GM12878 (cell line): ENCODE measurements at regions of chr4 and their contacts with region 1.

Region 1: GRCh38 chr4:163663454-163664225 is 169.2 kb downstream of the TMA16 start:
- DNase-seq: peak; percentile 78
- ATAC-seq: peak; percentile 87
- H3K4me3 ChIP-seq: no peak overlapping the region
- H3K27ac ChIP-seq: peak overlapping the region; percentile 70
- H3K4me1 ChIP-seq: peaks cover 39% of the 10 kb centered on the region
- H3K27me3 ChIP-seq: no peaks in the 10 kb centered on the region
- CTCF ChIP-seq: no peak
- EP300 ChIP-seq: peak; percentile 77 to 80
- POLR2A ChIP-seq: no peak
- RAD21 ChIP-seq: no peak

Region 2: GRCh38 chr4:162126729-162127128 is 1536.9 kb before region 1 on chr4:
- CTCF ChIA-PET with region 1: no interaction called
- POLR2A ChIA-PET with region 1: no interaction called
- RAD21 ChIA-PET with region 1: no interaction called
- SMC1A ChIA-PET with region 1: no interaction called
- in situ Hi-C with region 1: no loop called
- intact Hi-C with region 1: no loop called
- DNase-seq: no peak
- ATAC-seq: no peak
- H3K4me3 ChIP-seq: no peak overlapping the region
- H3K27ac ChIP-seq: no peak overlapping the region
- H3K4me1 ChIP-seq: no peaks in the 10 kb centered on the region
- H3K27me3 ChIP-seq: no peaks in the 10 kb centered on the region
- CTCF ChIP-seq: no peak
- EP300 ChIP-seq: no peak
- POLR2A ChIP-seq: no peak
- RAD21 ChIP-seq: no peak

Region 3: DNA sequence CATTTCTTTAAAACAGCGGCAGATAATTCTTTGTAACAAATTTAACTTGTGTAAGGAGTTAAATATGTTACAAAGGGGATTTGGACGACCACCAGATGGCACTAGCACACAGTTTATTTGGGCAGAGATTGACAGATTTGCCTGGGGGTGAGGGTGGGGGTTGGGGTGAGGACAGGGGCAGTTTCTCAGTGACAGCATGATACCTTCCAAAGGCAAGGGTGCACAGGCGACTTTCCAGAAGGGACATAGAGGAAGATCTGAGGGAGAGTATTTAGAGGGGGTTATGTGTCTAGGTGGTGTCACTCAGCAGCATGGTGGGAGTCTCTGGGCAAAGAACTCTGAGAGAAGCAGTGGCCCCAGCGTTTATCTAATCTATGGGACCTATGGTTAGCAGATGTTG is 178.7 kb before region 1 on chr4:
- CTCF ChIA-PET with region 1: no interaction called
- POLR2A ChIA-PET with region 1: no interaction called
- RAD21 ChIA-PET with region 1: no interaction called
- SMC1A ChIA-PET with region 1: interaction called, 3 read pairs
- in situ Hi-C with region 1: loop called (anchors 5 kb)
- intact Hi-C with region 1: no loop called
- DNase-seq: no peak
- ATAC-seq: peak; percentile 87
- H3K4me3 ChIP-seq: no peak overlapping the region
- H3K27ac ChIP-seq: no peak overlapping the region
- H3K4me1 ChIP-seq: peaks cover 12% of the 10 kb centered on the region; the same call in 1 of the 2 replicates
- H3K27me3 ChIP-seq: no peaks in the 10 kb centered on the region
- CTCF ChIP-seq: peak; percentile 55 to 73 (median 59); a peak in 5 of 6 replicates
- EP300 ChIP-seq: no peak
- POLR2A ChIP-seq: no peak
- RAD21 ChIP-seq: peak; percentile 91

Region 4: DNA sequence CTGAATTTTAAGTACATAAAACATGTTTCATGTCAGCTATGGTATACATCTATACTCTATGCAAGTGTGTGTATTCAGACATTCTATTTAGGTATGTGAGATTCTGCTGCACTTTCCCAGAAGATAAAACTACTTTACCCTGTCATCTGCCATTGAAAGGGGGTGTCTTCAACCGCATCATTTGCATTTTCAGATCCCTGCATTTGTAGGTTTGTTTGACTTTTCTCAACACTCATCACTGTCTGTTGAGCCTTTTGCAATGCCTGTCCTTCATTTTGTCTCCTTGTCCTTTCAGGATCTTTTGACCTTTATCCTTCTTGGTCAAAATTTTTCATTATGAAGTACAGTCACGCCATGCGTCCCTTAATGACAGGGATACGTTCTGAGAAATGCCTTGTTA is 65.6 kb before region 1 on chr4:
- CTCF ChIA-PET with region 1: interaction called, 26 read pairs
- POLR2A ChIA-PET with region 1: interaction called, 3 read pairs
- RAD21 ChIA-PET with region 1: interaction called, 68 read pairs
- SMC1A ChIA-PET with region 1: interaction called, 219 read pairs
- in situ Hi-C with region 1: loop called (anchors 5 kb)
- intact Hi-C with region 1: no loop called
- DNase-seq: peak; percentile 60
- ATAC-seq: peak; percentile 81
- H3K4me3 ChIP-seq: 0 out of 2 replicates have a peak overlapping the region, but pooled peaks have one; percentile 7
- H3K27ac ChIP-seq: peak overlapping the region; percentile 71
- H3K4me1 ChIP-seq: peaks cover 13% of the 10 kb centered on the region
- H3K27me3 ChIP-seq: no peaks in the 10 kb centered on the region
- CTCF ChIP-seq: no peak
- EP300 ChIP-seq: no peak
- POLR2A ChIP-seq: no peak
- RAD21 ChIP-seq: no peak; the same call in 1 of the 2 replicates

Region 5: GRCh38 chr4:163673848-163674697 is 10.4 kb after region 1 on chr4:
- CTCF ChIA-PET with region 1: interaction called, 81 read pairs
- POLR2A ChIA-PET with region 1: interaction called, 4 read pairs
- RAD21 ChIA-PET with region 1: interaction called, 31 read pairs
- SMC1A ChIA-PET with region 1: interaction called, 81 read pairs
- in situ Hi-C with region 1: no loop called
- intact Hi-C with region 1: no loop called
- DNase-seq: no peak
- ATAC-seq: peak; percentile 90
- H3K4me3 ChIP-seq: no peak overlapping the region; the same call in 1 of the 2 replicates
- H3K27ac ChIP-seq: no peak overlapping the region
- H3K4me1 ChIP-seq: no peaks in the 10 kb centered on the region; the same call in 1 of the 2 replicates
- H3K27me3 ChIP-seq: no peaks in the 10 kb centered on the region
- CTCF ChIP-seq: no peak
- EP300 ChIP-seq: no peak
- POLR2A ChIP-seq: no peak
- RAD21 ChIP-seq: no peak

Region 6: DNA sequence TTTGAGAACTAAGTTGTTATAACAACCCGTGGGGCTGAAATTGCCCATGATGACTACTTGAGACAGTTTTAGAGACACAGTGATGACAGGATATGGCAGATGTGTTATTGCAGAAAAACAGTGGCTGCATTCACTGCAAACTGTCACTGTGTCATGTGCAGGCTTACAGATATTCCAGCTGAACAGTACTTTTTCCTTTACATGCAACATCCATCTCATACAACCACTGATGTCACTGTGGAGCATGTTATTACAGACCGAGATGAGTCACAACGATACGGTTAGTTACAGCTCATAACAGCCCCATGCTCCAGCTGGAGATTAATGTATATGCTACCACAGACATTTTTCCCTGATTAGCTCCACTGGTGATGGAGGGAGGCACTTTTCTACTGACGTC is 38.3 kb after region 1 on chr4:
- CTCF ChIA-PET with region 1: no interaction called
- POLR2A ChIA-PET with region 1: no interaction called
- RAD21 ChIA-PET with region 1: no interaction called
- SMC1A ChIA-PET with region 1: interaction called, 3 read pairs
- in situ Hi-C with region 1: no loop called
- intact Hi-C with region 1: loop called (anchors 2 kb)
- DNase-seq: peak; percentile 49
- ATAC-seq: peak; percentile 93
- H3K4me3 ChIP-seq: no peak overlapping the region
- H3K27ac ChIP-seq: no peak overlapping the region
- H3K4me1 ChIP-seq: peaks cover 9% of the 10 kb centered on the region; the same call in 1 of the 2 replicates
- H3K27me3 ChIP-seq: no peaks in the 10 kb centered on the region
- CTCF ChIP-seq: no peak
- EP300 ChIP-seq: peak; percentile 49 to 77; a peak in 2 of 4 replicates
- POLR2A ChIP-seq: no peak
- RAD21 ChIP-seq: no peak

Region 7: DNA sequence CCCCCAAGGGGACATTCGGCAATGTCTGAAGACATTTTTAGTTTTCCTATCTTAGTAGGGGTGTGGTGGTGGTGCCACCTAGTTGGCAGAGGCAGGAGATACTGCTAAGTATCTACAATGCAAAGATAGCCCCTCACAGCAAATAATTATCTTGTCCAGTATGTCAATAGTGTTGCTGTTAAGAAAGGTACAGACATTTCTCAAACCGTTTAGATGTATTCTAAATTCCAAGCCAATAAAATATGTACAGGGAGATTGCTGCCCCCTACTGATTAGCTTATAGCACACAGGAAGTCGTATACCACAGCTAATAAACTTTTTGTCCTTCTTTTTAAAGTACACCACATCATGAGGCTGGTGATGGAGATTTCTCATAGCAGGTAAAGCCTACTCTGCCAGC is 91.4 kb after region 1 on chr4:
- CTCF ChIA-PET with region 1: interaction called, 42 read pairs
- POLR2A ChIA-PET with region 1: no interaction called
- RAD21 ChIA-PET with region 1: interaction called, 7 read pairs
- SMC1A ChIA-PET with region 1: interaction called, 7 read pairs
- in situ Hi-C with region 1: no loop called
- intact Hi-C with region 1: no loop called
- DNase-seq: peak; percentile 12
- ATAC-seq: peak; percentile 92
- H3K4me3 ChIP-seq: no peak overlapping the region
- H3K27ac ChIP-seq: no peak overlapping the region
- H3K4me1 ChIP-seq: no peaks in the 10 kb centered on the region; the same call in 1 of the 2 replicates
- H3K27me3 ChIP-seq: no peaks in the 10 kb centered on the region
- CTCF ChIP-seq: peak in 2 of 3 experiments; percentile 47 to 65
- EP300 ChIP-seq: no peak
- POLR2A ChIP-seq: no peak
- RAD21 ChIP-seq: peak; percentile 64